SK-N-SH (cell line): ENCODE measurements at regions of chr2 and their contacts with region 1.

Region 1: DNA sequence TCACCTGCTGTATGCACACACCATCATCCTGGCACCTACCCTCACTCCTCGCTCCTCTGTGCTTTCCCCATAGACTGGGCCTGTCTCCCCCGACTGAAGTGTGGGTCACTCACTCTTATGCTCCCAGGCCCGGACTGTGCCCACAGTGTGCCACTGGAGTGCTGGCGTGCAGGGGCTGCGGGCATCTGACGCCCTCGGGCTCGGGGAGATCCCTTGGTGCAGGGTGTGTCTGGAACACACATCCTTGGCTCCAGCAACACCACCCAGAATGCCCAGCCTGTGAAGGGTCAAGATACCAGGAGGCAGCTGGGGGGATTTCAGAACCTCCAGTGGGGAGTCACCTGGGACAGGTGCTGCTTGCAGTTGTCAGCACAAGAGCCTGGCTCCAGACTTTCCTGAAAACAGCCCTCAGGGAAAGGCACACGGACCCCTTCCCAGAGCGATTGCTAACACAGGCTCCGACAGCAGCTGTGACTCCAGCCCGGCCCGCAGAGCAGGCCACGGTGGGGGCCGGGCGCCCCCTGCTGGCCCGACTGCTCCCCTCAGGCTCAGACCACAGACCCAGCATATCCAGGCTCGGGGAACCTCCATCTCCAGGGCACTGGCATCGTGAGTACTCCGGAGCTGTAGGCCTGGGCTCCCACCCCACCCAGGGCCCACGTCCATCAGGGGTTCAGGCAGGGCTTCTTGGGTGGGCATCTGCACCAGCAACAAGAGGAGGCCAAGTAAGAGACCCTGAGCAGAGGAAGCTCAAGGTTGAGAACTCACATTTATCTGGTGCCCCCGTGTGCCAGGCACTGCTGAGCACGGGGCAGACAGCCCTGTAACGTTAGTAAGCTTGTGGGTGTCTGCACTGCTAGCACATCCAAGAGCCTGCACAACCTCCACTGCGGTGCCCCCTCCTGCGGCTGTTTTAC is 8.6 kb downstream of the HS1BP3 start:
- DNase-seq: peak; percentile 99
- H3K4me3 ChIP-seq: no peak overlapping the region; a peak in 1 of 4 replicates
- H3K27ac ChIP-seq: no peak overlapping the region
- H3K4me1 ChIP-seq: peaks cover 13 to 18% of the 10 kb centered on the region in 2 experiments; a peak in 3 of 4 replicates
- H3K27me3 ChIP-seq: no peaks in the 10 kb centered on the region
- CTCF ChIP-seq: peak; percentile 98
- EP300 ChIP-seq: no peak
- RAD21 ChIP-seq: peak; percentile 96

Region 2: GRCh38 chr2:20350753-20351554 is 291.4 kb before region 1 on chr2 and contains the start of gene PUM2:
- CTCF ChIA-PET with region 1: interaction called, 13 read pairs
- POLR2A ChIA-PET with region 1: no interaction called
- DNase-seq: peak; percentile 99
- H3K4me3 ChIP-seq: peak within 1 kb of the TSS; percentile 71 to 86
- H3K27ac ChIP-seq: peak within 1 kb of the TSS; percentile 82 to 99
- H3K4me1 ChIP-seq: peaks cover 11 to 48% of the 10 kb centered on the region in 2 experiments; a peak in 3 of 4 replicates
- H3K27me3 ChIP-seq: no peaks in the 10 kb centered on the region
- CTCF ChIP-seq: no peak
- EP300 ChIP-seq: no peak
- RAD21 ChIP-seq: no peak
- polyA plus RNA-seq, gene PUM2: 19.7 and 29.7 TPM in 2 replicates

Region 3: GRCh38 chr2:20384953-20385352 is 257.4 kb before region 1 on chr2:
- CTCF ChIA-PET with region 1: interaction called, 151 read pairs
- POLR2A ChIA-PET with region 1: no interaction called
- DNase-seq: no peak
- H3K4me3 ChIP-seq: no peak overlapping the region
- H3K27ac ChIP-seq: no peak overlapping the region
- H3K4me1 ChIP-seq: peaks cover 0 to 10% of the 10 kb centered on the region in 2 experiments; a peak in 1 of 4 replicates
- H3K27me3 ChIP-seq: peaks cover 9% of the 10 kb centered on the region; the same call in 1 of the 2 replicates
- CTCF ChIP-seq: no peak
- EP300 ChIP-seq: no peak
- RAD21 ChIP-seq: no peak

Region 4: DNA sequence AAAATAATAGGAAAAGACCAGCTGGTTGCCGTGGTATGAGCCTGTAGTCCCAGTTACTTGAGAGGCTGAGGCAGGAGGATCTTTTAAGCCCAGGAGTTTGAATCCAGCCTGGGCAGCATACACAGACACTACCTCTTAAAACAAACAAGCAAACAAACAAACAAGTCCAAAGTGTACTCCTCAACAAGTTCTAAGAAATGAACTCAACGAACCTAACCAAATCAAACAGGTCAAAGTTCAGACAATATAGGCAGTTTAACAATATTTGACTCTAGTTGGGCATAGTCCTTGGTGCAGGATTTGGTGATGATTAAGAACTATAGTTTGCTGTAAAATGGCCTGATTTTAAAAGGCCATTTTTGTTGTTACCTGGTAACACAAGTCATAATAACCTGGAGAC is 237.4 kb before region 1 on chr2:
- CTCF ChIA-PET with region 1: interaction called, 120 read pairs
- POLR2A ChIA-PET with region 1: no interaction called
- DNase-seq: no peak
- H3K4me3 ChIP-seq: no peak overlapping the region
- H3K27ac ChIP-seq: no peak overlapping the region
- H3K4me1 ChIP-seq: no peaks in the 10 kb centered on the region; a peak in 1 of 4 replicates
- H3K27me3 ChIP-seq: peaks cover 4% of the 10 kb centered on the region; the same call in 1 of the 2 replicates
- CTCF ChIP-seq: no peak
- EP300 ChIP-seq: no peak
- RAD21 ChIP-seq: no peak

Region 5: DNA sequence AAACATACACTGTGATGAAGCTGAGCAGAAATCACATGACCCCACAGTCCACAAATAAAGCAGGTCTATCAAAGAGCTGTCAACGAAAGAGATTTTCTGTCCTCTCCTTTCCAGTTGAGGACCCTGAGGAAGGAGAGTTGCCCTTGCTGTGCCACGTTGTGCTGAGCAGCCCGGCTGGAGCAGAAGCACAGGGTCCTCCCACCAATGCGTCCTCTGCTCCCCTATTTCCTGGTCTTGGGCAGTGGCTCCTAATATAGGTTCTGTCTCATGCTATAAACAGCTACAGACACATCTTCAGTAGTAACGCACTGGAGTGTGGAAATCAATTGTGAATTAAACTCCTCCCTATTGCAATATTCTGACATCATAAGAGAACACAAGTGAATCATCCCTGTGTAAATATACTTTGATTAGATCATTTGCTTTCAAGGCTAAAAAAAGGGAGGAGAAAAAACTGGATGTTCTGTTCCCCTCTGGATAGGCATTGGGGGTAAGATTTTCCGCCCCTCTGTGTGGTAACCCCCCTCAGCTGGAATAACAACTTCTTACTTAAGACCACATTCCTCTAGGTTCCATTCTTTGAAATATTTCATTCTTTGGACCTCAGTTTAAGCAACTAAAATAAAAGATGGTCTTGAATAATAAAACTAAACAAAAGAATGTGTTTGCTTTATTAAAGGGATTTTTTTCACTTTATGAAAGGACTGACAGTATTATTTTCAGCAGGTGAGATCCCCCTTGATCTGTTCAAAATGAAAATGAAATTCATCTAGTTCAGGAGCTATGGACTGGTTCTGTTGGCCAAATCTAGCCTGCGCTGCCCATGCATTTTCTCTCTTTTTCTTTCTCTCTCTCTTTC is 203.8 kb before region 1 on chr2:
- CTCF ChIA-PET with region 1: interaction called, 188 read pairs
- POLR2A ChIA-PET with region 1: no interaction called
- DNase-seq: no peak
- H3K4me3 ChIP-seq: no peak overlapping the region
- H3K27ac ChIP-seq: peak overlapping the region in 1 of 2 experiments; percentile 6; a peak in 1 of 4 replicates
- H3K4me1 ChIP-seq: peaks cover 2 to 6% of the 10 kb centered on the region in 2 experiments; a peak in 2 of 4 replicates
- H3K27me3 ChIP-seq: no peaks in the 10 kb centered on the region; the same call in 1 of the 2 replicates
- CTCF ChIP-seq: no peak
- EP300 ChIP-seq: no peak
- RAD21 ChIP-seq: no peak

Region 6: DNA sequence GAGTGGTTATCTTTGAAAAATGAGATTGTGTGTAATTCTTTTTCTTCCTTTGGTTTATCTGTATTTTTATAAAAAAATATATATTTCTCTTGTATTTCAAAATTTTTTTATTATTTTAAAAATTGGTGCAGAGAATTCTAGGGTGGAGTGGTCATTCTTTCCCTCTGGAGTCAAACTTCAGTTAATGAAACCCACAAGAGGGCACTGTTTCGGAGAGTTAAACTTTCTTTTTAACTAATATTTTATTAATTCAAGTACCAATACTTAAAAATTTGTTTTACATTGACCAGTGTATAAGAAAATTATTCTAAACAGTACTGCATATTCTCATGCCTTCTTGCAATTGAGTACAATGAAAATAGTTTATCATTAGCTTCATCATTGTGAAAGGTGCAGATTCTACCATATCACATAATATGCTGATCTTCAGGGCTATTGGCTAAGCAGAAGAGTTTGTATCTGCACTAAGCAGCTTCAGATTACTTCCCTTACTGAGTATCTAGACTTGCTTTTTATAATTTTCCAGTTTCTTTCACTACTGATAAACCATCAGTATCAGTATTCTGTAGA is 41.5 kb before region 1 on chr2:
- CTCF ChIA-PET with region 1: interaction called, 107 read pairs
- POLR2A ChIA-PET with region 1: no interaction called
- DNase-seq: no peak
- H3K4me3 ChIP-seq: no peak overlapping the region
- H3K27ac ChIP-seq: no peak overlapping the region
- H3K4me1 ChIP-seq: peaks cover 21 to 28% of the 10 kb centered on the region in 2 experiments; a peak in 2 of 4 replicates
- H3K27me3 ChIP-seq: no peaks in the 10 kb centered on the region
- CTCF ChIP-seq: peak; percentile 67
- EP300 ChIP-seq: no peak
- RAD21 ChIP-seq: peak; percentile 50; the same call in 1 of the 2 replicates